ENCODE measurements at regions of chr3 and their contacts with region 1.

Region 1: DNA sequence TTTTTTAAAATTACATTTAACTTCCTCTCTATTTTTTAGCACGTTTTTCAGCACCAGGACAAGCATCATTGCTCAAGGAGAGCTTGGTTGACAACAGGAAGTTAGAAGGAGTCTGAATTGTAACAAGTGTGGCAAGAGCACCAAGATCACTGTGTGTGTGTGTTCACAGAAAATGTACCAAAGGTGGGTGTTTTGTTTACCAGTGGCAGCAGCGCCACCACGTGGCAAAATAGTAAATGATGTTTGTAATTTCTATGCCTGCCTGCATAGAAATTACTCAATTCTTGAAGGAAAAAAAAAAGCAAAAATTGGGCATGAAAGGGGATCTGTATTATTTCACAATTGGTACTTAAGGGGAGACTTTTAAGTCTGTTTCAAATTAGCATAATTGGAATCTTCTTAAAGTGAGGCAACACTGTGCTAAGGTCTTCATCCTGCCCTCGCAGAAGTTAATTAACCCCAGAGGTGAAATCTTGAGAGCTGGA is 7.4 kb upstream of the U2SURP start:
- DNase-seq: peak; percentile 37
- H3K4me3 Mint-ChIP-seq: no peak overlapping the region
- H3K27ac Mint-ChIP-seq: no peak overlapping the region
- H3K4me1 Mint-ChIP-seq: peaks cover 6% of the 10 kb centered on the region
- H3K27me3 Mint-ChIP-seq: peaks cover 20% of the 10 kb centered on the region

Region 2: DNA sequence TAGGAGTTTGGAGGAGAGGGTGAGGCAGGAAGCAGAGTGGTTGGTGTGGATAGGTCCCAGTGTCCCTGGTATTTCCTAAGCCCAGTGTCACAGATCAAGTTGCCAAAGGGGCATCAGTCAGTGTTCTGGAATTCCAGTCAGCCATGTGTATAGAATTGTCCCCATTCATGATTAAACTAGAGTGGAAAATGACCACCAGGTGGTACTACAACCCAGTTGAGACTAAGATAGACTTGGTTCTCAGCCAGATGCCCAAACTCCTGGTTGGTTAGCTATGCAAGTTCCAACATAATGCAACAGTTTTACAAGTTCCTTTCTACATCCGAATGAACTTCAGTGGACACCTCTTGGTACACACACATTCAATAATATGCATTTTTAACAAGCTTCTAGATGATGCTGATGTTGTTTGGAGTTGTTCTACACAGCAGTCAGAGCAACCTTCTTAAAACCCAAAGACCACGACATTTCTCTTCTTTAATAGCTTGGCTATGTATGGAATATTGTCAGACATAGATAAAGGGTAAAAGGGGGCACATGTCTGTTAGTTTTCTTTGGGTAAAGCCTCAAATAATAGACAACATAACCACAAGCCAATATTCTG is 407.1 kb before region 1 on chr3:
- intact Hi-C with region 1: loop called (anchors 1 kb)
- DNase-seq: no peak
- H3K4me3 Mint-ChIP-seq: no peak overlapping the region
- H3K27ac Mint-ChIP-seq: no peak overlapping the region
- H3K4me1 Mint-ChIP-seq: no peaks in the 10 kb centered on the region
- H3K27me3 Mint-ChIP-seq: peaks cover 45% of the 10 kb centered on the region

Region 3: GRCh38 chr3:142828703-142829305 is 165.2 kb before region 1 on chr3:
- intact Hi-C with region 1: loop called (anchors 1 kb)
- DNase-seq: peak; percentile 50
- H3K4me3 Mint-ChIP-seq: no peak overlapping the region
- H3K27ac Mint-ChIP-seq: no peak overlapping the region
- H3K4me1 Mint-ChIP-seq: no peaks in the 10 kb centered on the region
- H3K27me3 Mint-ChIP-seq: peaks cover 25% of the 10 kb centered on the region

Region 4: GRCh38 chr3:142944342-142944741 is 49.7 kb before region 1 on chr3:
- intact Hi-C with region 1: no loop called
- DNase-seq: no peak
- H3K4me3 Mint-ChIP-seq: peak overlapping the region; percentile 0
- H3K27ac Mint-ChIP-seq: no peak overlapping the region
- H3K4me1 Mint-ChIP-seq: peaks cover 15% of the 10 kb centered on the region
- H3K27me3 Mint-ChIP-seq: peaks cover 39% of the 10 kb centered on the region

Measured in activated T-helper 2 cell treated with anti-CD3 and anti-CD28 coated beads, Interferon-gamma antibody, Interleukin-2, Interleukin-4, amounts not matched to agents 10 μg/mL and 5 μg/mL and 100 μg/mL, durations not matched to agents 14 hours and 24 hours and 36 hours (primary cell).